ENCODE measurements at regions of chr11 and their contacts with region 1.

Region 1: DNA sequence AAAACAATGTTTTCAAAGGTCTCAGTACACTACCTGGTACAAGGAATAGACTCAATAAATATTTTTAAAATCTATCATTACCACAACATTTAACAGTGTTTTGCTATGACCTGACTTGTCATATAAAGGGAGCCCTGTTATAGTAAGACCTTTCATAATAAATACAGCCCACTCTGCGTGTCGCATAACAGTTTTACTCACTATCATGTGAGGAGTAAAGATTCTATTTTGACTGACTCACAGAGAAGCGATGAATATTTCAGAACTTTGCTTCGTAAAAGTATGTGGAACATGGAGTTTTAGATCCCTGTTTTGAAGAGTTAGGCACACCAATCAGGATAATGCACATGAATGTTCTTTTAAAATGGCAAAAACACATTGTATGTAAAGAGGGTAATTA is 531.2 kb downstream of the KCNA4 start:
- DNase-seq: no peak
- ATAC-seq: no peak
- H3K4me3 Mint-ChIP-seq: no peak overlapping the region
- H3K27ac Mint-ChIP-seq: no peak overlapping the region
- H3K4me1 Mint-ChIP-seq: no peaks in the 10 kb centered on the region
- H3K27me3 Mint-ChIP-seq: no peaks in the 10 kb centered on the region
- CTCF ChIP-seq: no peak

Region 2: GRCh38 chr11:29538339-29539036 is 52.8 kb after region 1 on chr11:
- CTCF ChIA-PET with region 1: no interaction called
- POLR2A ChIA-PET with region 1: no interaction called
- intact Hi-C with region 1: loop called (anchors 1 kb)
- DNase-seq: no peak
- ATAC-seq: no peak
- H3K4me3 Mint-ChIP-seq: no peak overlapping the region
- H3K27ac Mint-ChIP-seq: no peak overlapping the region
- H3K4me1 Mint-ChIP-seq: no peaks in the 10 kb centered on the region
- H3K27me3 Mint-ChIP-seq: no peaks in the 10 kb centered on the region
- CTCF ChIP-seq: no peak